ENCODE measurements at regions of chr3 and their contacts with region 1.

Region 1: GRCh38 chr3:23971684-23972083 is 26.6 kb downstream of the NR1D2 start:
- DNase-seq: no peak
- H3K4me3 ChIP-seq: no peak overlapping the region
- H3K27ac ChIP-seq: no peak overlapping the region
- H3K4me1 ChIP-seq: no peaks in the 10 kb centered on the region
- H3K27me3 ChIP-seq: no peaks in the 10 kb centered on the region
- CTCF ChIP-seq: no peak
- EP300 ChIP-seq: no peak
- POLR2A ChIP-seq: no peak
- RAD21 ChIP-seq: no peak

Region 2: GRCh38 chr3:23981955-23982354 is 10.3 kb after region 1 on chr3:
- CTCF ChIA-PET with region 1: interaction called, 4 read pairs
- POLR2A ChIA-PET with region 1: interaction called, 10 read pairs
- DNase-seq: peak in 1 of 2 experiments; percentile 54
- H3K4me3 ChIP-seq: no peak overlapping the region
- H3K27ac ChIP-seq: no peak overlapping the region
- H3K4me1 ChIP-seq: no peaks in the 10 kb centered on the region
- H3K27me3 ChIP-seq: no peaks in the 10 kb centered on the region
- CTCF ChIP-seq: no peak
- EP300 ChIP-seq: no peak
- POLR2A ChIP-seq: no peak
- RAD21 ChIP-seq: no peak

Measured in H1 (cell line).